ENCODE measurements at regions of chr22 and their contacts with region 1.

Region 1: DNA sequence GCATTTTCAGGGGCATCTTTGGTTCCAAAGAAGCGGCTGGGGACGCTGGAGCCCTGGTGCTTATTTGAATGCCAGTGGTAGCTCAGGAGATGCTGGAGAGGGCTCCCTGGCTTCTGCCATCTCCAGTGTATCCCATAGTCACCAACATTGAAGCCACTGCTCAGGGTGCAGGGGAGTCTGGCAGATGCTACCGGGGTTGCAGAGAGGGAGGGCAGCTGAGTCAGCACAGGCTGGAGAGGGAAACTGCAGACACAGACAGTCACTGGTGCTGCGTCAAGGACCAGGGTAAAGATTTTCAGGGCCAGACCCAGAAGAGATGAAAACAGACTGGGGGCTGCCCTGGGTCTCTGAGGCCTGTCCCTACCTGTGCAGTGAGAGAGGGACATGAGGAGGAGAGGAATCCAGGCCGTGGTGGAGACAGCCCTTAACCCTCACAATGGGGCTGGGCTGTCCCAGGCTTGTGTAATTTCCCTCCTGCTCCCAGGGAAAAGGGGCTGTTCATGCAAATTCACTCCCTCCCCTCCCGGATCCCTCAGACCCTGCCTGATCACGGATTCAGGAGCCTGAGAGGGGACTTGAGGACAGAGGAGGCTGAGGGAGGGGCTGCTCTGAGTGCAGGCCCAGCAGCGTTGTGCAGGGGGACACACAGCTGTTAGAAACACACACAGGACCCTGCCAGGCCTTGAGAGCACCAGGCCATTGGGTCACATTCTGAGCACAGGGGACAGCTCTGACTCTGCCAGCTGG is 126.9 kb upstream of the GRK3 start:
- DNase-seq: no peak
- ATAC-seq: peak in 2 of 4 donors; percentile 14 to 17
- H3K4me3 ChIP-seq: no peak overlapping the region
- H3K27ac ChIP-seq: no peak overlapping the region
- H3K4me1 ChIP-seq: no peaks in the 10 kb centered on the region
- H3K27me3 ChIP-seq: no peaks in the 10 kb centered on the region
- CTCF ChIP-seq: no peak
- POLR2A ChIP-seq: no peak

Region 2: GRCh38 chr22:25375683-25376082 is 61.9 kb before region 1 on chr22:
- intact Hi-C with region 1: loop called in 1 of 2 experiments (anchors 10 kb)
- DNase-seq: no peak
- ATAC-seq: no peak
- H3K4me3 ChIP-seq: no peak overlapping the region
- H3K27ac ChIP-seq: no peak overlapping the region
- H3K4me1 ChIP-seq: no peaks in the 10 kb centered on the region
- H3K27me3 ChIP-seq: no peaks in the 10 kb centered on the region
- CTCF ChIP-seq: no peak
- POLR2A ChIP-seq: no peak

Region 3: GRCh38 chr22:25536589-25536988 is 99.0 kb after region 1 on chr22:
- intact Hi-C with region 1: no loop called
- DNase-seq: no peak
- ATAC-seq: no peak
- H3K4me3 ChIP-seq: no peak overlapping the region
- H3K27ac ChIP-seq: no peak overlapping the region
- H3K4me1 ChIP-seq: no peaks in the 10 kb centered on the region
- H3K27me3 ChIP-seq: no peaks in the 10 kb centered on the region
- CTCF ChIP-seq: no peak
- POLR2A ChIP-seq: no peak

Measured in right lobe of liver (tissue), 6 donors.